ENCODE measurements at regions of chr17 and their contacts with region 1.

Region 1: GRCh38 chr17:78970834-78971773 is 8.6 kb downstream of the LGALS3BP start:
- DNase-seq: peak; percentile 86
- H3K4me3 ChIP-seq: no peak overlapping the region
- H3K4me3 Mint-ChIP-seq: no peak overlapping the region
- H3K27ac Mint-ChIP-seq: peak overlapping the region; percentile 87
- H3K4me1 ChIP-seq: peaks cover 42% of the 10 kb centered on the region
- H3K4me1 Mint-ChIP-seq: peaks cover 24% of the 10 kb centered on the region
- H3K27me3 ChIP-seq: no peaks in the 10 kb centered on the region
- H3K27me3 Mint-ChIP-seq: no peaks in the 10 kb centered on the region
- CTCF ChIP-seq: peak; percentile 87 to 95

Region 2: GRCh38 chr17:78865682-78866390 is 105.3 kb before region 1 on chr17:
- CTCF ChIA-PET with region 1: interaction called, 41 read pairs
- POLR2A ChIA-PET with region 1: no interaction called
- intact Hi-C with region 1: loop called (anchors 1 kb)
- DNase-seq: peak; percentile 81 to 87
- H3K4me3 ChIP-seq: no peak overlapping the region
- H3K4me3 Mint-ChIP-seq: no peak overlapping the region
- H3K27ac Mint-ChIP-seq: no peak overlapping the region
- H3K4me1 ChIP-seq: no peaks in the 10 kb centered on the region
- H3K4me1 Mint-ChIP-seq: no peaks in the 10 kb centered on the region
- H3K27me3 ChIP-seq: no peaks in the 10 kb centered on the region
- H3K27me3 Mint-ChIP-seq: no peaks in the 10 kb centered on the region
- CTCF ChIP-seq: peak; percentile 96 to 97

Region 3: GRCh38 chr17:78986048-78986648 is 15.0 kb after region 1 on chr17:
- CTCF ChIA-PET with region 1: interaction called, 10 read pairs
- POLR2A ChIA-PET with region 1: no interaction called
- intact Hi-C with region 1: no loop called
- DNase-seq: peak in 1 of 2 experiments; percentile 46
- H3K4me3 ChIP-seq: peak overlapping the region; percentile 8; the same call in 1 of the 2 replicates
- H3K4me3 Mint-ChIP-seq: peak overlapping the region; percentile 65
- H3K27ac Mint-ChIP-seq: peak overlapping the region; percentile 67
- H3K4me1 ChIP-seq: peaks cover 13% of the 10 kb centered on the region
- H3K4me1 Mint-ChIP-seq: no peaks in the 10 kb centered on the region
- H3K27me3 ChIP-seq: no peaks in the 10 kb centered on the region
- H3K27me3 Mint-ChIP-seq: no peaks in the 10 kb centered on the region
- CTCF ChIP-seq: peak; percentile 26 to 32

Region 4: GRCh38 chr17:78998311-78999055 is 27.4 kb after region 1 on chr17:
- CTCF ChIA-PET with region 1: no interaction called
- POLR2A ChIA-PET with region 1: no interaction called
- intact Hi-C with region 1: no loop called
- DNase-seq: peak in 1 of 2 experiments; percentile 26
- H3K4me3 ChIP-seq: no peak overlapping the region
- H3K4me3 Mint-ChIP-seq: no peak overlapping the region
- H3K27ac Mint-ChIP-seq: no peak overlapping the region
- H3K4me1 ChIP-seq: no peaks in the 10 kb centered on the region
- H3K4me1 Mint-ChIP-seq: no peaks in the 10 kb centered on the region
- H3K27me3 ChIP-seq: no peaks in the 10 kb centered on the region
- H3K27me3 Mint-ChIP-seq: no peaks in the 10 kb centered on the region
- CTCF ChIP-seq: no peak

Region 5: GRCh38 chr17:79053251-79053925 is 82.3 kb after region 1 on chr17:
- CTCF ChIA-PET with region 1: no interaction called
- POLR2A ChIA-PET with region 1: no interaction called
- intact Hi-C with region 1: no loop called
- DNase-seq: no peak
- H3K4me3 ChIP-seq: no peak overlapping the region
- H3K4me3 Mint-ChIP-seq: no peak overlapping the region
- H3K27ac Mint-ChIP-seq: no peak overlapping the region
- H3K4me1 ChIP-seq: no peaks in the 10 kb centered on the region
- H3K4me1 Mint-ChIP-seq: no peaks in the 10 kb centered on the region
- H3K27me3 ChIP-seq: no peaks in the 10 kb centered on the region
- H3K27me3 Mint-ChIP-seq: no peaks in the 10 kb centered on the region
- CTCF ChIP-seq: no peak